Spleen (tissue), 13 donors: ENCODE measurements at regions of chr11 and their contacts with region 1.

Region 1: DNA sequence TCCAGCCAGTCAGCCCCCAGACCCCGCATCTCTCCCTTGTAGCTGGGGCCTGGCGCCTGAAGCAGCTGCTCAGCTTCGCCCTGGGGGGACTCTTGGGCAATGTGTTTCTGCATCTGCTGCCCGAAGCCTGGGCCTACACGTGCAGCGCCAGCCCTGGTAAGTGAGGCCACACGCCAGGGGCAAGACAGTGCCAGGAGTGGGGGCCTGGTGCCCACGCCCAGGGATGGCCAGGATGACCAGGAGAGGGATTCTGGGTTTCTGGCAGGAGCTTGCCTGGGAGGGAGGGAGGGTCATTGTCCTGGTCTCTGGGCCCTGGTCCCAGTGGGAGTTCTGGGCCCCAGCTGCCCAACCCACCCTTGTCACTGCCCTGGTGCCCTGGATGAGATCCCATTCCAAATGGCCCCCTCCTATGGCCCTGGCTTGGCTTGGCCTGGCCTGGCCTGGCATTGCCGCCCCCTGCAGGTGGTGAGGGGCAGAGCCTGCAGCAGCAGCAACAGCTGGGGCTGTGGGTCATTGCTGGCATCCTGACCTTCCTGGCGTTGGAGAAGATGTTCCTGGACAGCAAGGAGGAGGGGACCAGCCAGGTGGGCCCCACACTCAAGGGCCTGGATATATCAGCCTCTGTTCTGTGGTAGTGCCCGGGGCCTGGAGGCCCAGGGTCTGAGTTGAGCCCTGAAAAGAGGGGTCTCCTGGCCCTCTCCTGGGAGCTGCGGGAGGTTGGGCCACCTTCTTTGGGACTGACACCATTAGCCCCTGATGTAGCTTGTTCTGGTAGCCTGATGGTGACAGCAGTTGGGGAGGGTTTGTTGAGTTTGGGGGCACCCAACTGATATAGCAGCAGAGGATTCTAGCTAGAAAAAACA is 3.7 kb downstream of the SLC39A13 start:
- DNase-seq: peak; percentile 93
- H3K4me3 ChIP-seq: no peak overlapping the region
- H3K27ac ChIP-seq: peak overlapping the region in 4 of 8 donors; percentile 5 to 36 (median 17)
- H3K4me1 ChIP-seq: peaks cover 14 to 61% (median 44%) of the 10 kb centered on the region in 6 donors
- H3K27me3 ChIP-seq: no peaks in the 10 kb centered on the region
- CTCF ChIP-seq: peak; percentile 59 to 94 (median 84)
- POLR2A ChIP-seq: no peak

Region 2: DNA sequence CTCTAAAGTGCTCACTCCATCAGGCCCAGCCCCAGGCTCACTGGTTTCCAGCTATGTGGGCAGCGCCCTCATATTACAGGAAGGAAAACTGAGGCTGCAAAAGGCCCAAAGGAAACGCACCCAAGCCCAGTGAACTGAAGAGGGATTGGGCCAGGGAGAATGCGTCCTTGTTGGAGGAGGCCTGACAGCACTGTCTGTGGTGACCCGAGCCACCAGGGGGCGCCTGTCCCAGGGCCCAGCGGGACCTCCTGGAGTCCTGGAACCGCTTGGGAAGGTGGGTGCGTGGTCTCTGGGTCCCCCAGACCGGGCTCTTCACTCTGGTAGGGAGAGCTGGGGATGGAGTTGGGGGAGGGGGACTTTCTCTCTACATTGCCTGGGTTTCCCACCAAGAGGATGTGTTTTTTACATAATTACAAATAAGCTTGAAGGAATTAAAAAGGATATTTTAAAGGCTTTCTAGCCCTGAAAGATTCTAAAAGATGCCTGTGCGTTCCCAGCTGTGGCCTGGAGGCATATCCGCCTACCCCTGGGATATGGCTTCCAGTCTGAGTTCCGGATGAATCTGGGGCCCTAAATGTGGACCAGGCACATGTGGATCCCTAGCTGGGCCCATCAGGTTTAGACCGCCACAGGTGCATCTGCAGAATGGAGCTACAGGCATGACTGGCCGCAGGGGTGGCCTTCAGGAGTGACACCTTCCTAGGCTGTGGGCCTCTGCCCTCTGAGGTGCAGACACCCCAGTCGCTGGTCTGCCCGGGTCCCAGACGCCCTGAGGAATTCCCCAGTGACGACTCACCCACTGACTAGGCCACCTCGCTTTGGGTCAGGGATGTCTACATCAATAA is 38.0 kb before region 1 on chr11:
- intact Hi-C with region 1: loop called (anchors 2 kb)
- DNase-seq: peak; percentile 96
- H3K4me3 ChIP-seq: peak overlapping the region in 5 of 8 donors; percentile 45 to 77 (median 56)
- H3K27ac ChIP-seq: peak overlapping the region; percentile 30 to 98 (median 94)
- H3K4me1 ChIP-seq: peaks cover 4 to 90% (median 30%) of the 10 kb centered on the region in 6 donors
- H3K27me3 ChIP-seq: no peaks in the 10 kb centered on the region
- CTCF ChIP-seq: peak; percentile 88 to 97 (median 93)
- POLR2A ChIP-seq: no peak

Region 3: DNA sequence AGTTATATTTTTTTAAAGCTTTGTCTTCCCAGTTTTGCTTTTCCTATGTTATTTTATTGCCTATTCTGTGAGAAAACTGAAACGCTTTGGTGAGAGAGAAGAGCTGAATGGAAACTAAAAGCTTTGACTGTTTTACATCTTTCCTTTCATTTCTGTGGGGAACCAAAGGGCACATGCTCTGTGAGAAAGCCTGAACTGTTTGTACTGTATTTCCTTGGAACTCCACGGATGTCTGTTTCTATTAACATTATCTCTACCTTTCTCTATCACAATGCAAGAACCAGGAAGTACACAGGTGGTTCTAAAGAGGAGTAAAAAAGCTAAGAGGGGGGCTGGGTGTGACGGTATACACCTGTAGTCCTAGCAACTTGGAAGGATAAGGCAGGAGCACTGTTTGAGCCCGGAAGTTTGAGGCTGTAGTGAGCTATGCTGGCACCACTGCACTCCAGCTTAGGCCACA is 97.0 kb after region 1 on chr11:
- intact Hi-C with region 1: no loop called
- DNase-seq: no peak
- H3K4me3 ChIP-seq: no peak overlapping the region
- H3K27ac ChIP-seq: peak overlapping the region in 6 of 8 donors; percentile 41 to 70 (median 62)
- H3K4me1 ChIP-seq: peaks cover 40 to 100% (median 78%) of the 10 kb centered on the region in 6 donors
- H3K27me3 ChIP-seq: no peaks in the 10 kb centered on the region
- CTCF ChIP-seq: no peak
- POLR2A ChIP-seq: no peak